PC-3 (cell line): ENCODE measurements at regions of chr9 and their contacts with region 1.

Region 1: DNA sequence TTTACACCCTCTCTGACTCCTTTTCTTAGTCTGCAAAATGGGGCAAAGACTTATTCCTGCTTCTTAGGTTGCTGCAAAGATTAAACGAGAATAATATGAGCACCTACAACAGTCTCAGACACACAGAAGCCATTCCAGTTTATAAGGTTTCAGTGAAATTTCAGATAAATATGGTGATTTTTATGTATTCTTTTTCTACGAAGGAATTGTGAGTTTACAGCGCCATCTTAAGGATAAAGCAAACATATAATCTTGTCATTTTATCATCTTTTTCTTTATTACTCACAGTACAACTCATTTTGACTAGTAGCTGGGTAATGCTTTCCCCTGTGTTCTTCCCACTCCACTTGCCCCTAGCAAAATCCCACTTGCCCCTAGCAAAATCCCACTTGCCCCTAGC is 29.2 kb upstream of the SMC5 start:
- DNase-seq: peak; percentile 52
- ATAC-seq: no peak
- H3K4me3 ChIP-seq: no peak overlapping the region
- H3K27ac ChIP-seq: no peak overlapping the region
- H3K4me1 ChIP-seq: no peaks in the 10 kb centered on the region
- H3K27me3 ChIP-seq: no peaks in the 10 kb centered on the region
- CTCF ChIP-seq: peak; percentile 59

Region 2: GRCh38 chr9:70065572-70065971 is 164.0 kb before region 1 on chr9:
- CTCF ChIA-PET with region 1: no interaction called
- POLR2A ChIA-PET with region 1: no interaction called
- intact Hi-C with region 1: no loop called
- DNase-seq: no peak
- ATAC-seq: no peak
- H3K4me3 ChIP-seq: no peak overlapping the region
- H3K27ac ChIP-seq: no peak overlapping the region
- H3K4me1 ChIP-seq: no peaks in the 10 kb centered on the region
- H3K27me3 ChIP-seq: peaks cover 14% of the 10 kb centered on the region; the same call in 1 of the 2 replicates
- CTCF ChIP-seq: no peak

Region 3: DNA sequence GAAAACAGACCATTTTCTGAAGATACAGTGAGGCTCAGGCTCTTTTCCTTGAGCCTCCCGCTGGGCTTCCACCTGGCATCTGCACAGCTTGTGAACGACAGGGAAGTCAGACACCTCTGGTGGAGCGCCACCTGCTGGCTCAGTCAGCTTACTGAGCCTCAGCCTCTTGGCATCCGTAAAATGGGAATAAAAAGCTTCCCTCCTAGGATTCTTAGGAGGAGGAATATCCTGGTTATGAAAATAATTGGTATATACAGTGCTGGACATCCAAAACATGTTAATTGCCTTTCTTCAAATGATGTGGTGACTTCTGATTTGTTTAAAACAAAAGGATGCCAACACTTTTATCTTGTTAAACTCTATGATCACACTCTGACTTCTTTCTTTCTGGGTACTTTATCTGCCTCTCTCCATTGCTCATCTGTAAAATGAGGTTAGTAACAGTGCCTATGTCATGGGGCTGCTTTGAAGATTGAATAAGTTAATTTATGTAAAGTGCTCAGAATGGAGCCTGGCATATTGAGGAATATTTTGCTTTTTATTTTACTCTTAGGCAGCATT is 118.5 kb before region 1 on chr9:
- CTCF ChIA-PET with region 1: interaction called, 4 read pairs
- POLR2A ChIA-PET with region 1: no interaction called
- intact Hi-C with region 1: loop called (anchors 5 kb)
- DNase-seq: peak; percentile 77
- ATAC-seq: peak; percentile 70
- H3K4me3 ChIP-seq: no peak overlapping the region
- H3K27ac ChIP-seq: peak overlapping the region; percentile 76
- H3K4me1 ChIP-seq: peaks cover 24% of the 10 kb centered on the region
- H3K27me3 ChIP-seq: no peaks in the 10 kb centered on the region
- CTCF ChIP-seq: peak; percentile 89

Region 4: GRCh38 chr9:70195456-70195855 is 34.1 kb before region 1 on chr9:
- CTCF ChIA-PET with region 1: no interaction called
- POLR2A ChIA-PET with region 1: no interaction called
- intact Hi-C with region 1: no loop called
- DNase-seq: no peak
- ATAC-seq: no peak
- H3K4me3 ChIP-seq: no peak overlapping the region
- H3K27ac ChIP-seq: no peak overlapping the region
- H3K4me1 ChIP-seq: peaks cover 9% of the 10 kb centered on the region; the same call in 1 of the 2 replicates
- H3K27me3 ChIP-seq: no peaks in the 10 kb centered on the region
- CTCF ChIP-seq: no peak